HEK293 (cell line): ENCODE measurements at regions of chr22 and their contacts with region 1.

Region 1: DNA sequence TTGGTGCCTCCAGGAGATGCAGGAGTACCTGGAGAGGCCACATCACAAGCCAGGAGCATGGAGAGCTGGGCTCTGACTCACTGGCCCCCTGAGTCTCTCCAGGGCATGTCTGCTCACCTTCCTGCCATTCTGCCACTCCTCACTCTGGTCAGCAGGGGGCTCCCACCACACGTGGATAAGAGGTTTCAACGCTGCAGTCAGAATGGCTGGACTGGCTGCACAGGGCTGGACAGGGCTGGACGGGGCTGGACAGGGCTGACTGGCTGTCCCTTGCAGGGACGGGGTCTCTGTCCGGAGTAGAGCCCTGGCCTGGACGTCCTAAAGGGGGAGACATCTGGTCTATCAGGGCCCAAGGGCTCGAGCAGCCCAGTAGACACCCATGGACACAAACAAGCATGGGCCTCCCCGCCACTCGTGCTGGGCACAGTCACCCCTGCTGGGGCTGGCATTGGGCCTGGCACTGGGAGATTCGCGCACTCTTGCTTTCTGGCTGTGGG is 34.6 kb downstream of the CYTH4 start:
- H3K4me3 ChIP-seq: no peak overlapping the region
- H3K27ac ChIP-seq: no peak overlapping the region
- H3K4me1 ChIP-seq: no peaks in the 10 kb centered on the region
- CTCF ChIP-seq: peak; percentile 95

Region 2: DNA sequence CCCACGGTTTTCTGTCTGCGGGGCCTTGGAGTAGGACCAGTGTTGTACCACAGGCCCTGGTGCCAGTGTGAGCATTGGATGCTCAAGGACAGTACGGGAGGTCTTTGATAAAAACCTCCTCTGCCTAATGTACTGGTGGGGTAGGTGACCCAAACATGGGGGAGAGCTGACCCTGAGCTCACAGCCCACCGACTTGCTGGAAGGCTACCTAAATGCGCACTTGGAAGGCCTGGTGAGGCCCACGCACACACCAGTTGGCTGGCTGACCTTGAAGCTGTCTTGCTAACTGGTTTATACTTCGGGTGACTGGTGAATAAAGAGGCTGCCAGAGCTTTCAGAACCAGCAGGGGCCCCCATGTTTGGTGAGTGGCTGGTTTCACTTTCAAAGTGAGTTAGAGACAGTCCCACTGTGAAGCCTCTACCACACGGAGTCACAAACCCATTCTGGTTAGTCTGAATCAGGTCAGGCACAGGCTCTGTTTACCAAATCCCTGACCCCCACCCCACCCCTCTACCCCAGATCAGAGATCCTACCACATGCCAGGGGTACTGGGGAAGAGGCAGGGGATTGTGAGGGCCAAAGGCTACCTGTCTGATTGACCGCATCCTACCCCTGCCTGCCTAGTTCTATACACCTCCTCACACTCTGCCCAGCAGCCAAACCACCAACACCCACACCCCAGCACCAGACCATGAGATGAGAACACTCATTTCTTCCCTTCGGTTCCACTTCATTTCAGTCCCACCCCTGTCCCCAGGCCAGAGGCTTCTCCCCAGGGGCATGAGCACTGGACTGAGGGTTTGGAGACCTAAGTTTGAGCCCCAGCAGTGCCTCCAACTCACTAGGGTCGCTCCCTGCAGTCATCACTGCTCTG is 154.5 kb before region 1 on chr22:
- CTCF ChIA-PET with region 1: no interaction called
- POLR2A ChIA-PET with region 1: no interaction called
- H3K4me3 ChIP-seq: no peak overlapping the region
- H3K27ac ChIP-seq: no peak overlapping the region
- H3K4me1 ChIP-seq: no peaks in the 10 kb centered on the region
- CTCF ChIP-seq: no peak

Region 3: GRCh38 chr22:37267135-37267587 is 49.8 kb before region 1 on chr22:
- CTCF ChIA-PET with region 1: interaction called, 10 read pairs
- POLR2A ChIA-PET with region 1: no interaction called
- H3K4me3 ChIP-seq: peak overlapping the region; percentile 12; the same call in 1 of the 2 replicates
- H3K27ac ChIP-seq: no peak overlapping the region
- H3K4me1 ChIP-seq: no peaks in the 10 kb centered on the region
- CTCF ChIP-seq: no peak

Region 4: DNA sequence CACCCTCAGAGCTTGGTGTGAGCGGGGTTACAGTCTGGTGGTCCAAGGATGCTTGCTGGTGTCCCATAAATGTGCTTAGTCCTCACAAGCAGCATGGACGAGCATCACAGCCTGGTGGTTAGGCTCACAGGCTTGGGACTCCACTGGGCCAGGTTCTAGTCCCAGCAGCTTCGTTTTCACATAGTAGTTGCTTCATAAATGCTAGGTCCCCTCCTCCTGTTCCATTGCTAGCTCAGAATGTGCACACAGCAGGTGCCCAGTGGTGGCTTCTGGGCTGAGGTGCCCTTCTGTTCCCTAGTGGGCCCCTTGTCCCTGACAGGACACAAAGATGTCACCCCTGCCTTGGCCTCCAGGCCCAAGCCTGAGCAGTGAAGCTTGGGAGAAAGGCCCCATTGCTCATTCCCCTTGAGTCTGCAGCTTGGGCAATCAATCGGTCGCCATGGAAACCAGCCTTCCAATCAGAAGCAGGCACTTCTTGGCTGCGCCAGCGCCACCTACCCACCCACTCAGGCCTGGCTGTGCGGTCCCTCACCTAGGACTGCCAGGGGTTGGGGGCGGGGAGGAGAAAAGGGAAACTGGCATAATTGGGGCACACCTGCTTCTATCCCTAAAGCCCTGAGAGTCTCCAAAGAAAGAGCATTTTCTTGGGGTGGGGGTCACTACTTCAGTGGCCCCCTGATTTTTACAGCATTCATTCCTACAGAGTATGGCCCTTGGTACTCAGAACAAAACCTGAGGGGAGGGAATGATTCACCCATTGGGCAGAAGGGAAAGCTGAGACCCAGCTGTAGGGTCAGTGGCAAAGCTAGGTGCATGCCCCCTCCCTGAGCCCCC is 13.5 kb after region 1 on chr22:
- CTCF ChIA-PET with region 1: interaction called, 42 read pairs
- POLR2A ChIA-PET with region 1: no interaction called
- H3K4me3 ChIP-seq: no peak overlapping the region
- H3K27ac ChIP-seq: no peak overlapping the region
- H3K4me1 ChIP-seq: no peaks in the 10 kb centered on the region
- CTCF ChIP-seq: peak; percentile 37; the same call in 1 of the 2 replicates

Region 5: DNA sequence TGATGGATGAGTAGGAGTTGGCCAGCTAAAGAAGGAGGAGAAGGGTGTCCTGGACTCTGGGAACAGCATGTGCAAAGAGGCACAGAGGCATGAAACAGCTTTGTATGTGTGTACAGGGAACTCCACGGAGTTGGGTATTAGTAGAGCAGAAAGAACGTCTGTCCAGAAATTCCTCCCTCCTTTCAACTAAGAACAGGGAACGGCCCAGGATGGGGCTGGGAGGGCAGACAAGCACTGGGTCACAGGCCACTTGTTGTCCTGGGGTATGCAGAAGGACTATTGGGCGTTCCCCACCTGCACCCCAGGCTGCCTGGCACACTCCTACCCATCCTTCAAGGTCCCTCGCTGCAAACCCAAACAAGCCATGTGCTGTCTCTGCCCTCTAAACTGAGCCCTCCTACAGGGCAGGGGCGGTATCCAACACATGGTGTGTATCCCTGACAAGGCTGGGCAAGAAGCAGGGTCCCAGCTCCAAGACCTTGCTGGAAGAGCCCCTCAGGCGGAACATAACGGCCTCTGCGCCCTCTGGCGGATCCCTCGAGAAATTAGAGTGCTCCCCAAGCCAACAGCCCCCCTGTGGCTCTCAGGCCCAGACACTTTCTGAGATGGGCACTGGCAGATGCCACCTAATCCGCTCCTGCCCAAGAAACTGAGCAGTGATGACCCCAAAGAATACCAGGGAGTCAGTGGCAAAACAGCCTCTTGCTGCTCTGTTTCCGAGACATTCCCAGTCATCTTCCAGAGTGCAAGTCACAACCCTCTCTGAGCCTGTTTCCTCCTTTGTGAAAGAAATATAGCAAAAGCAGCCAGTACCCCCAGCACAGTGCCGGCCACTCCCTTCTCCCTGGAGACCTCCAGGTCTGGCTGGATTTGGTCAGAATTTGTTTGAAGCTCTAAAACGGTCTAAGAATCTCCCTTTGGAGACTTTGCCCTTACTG is 112.0 kb after region 1 on chr22:
- CTCF ChIA-PET with region 1: interaction called, 17 read pairs
- POLR2A ChIA-PET with region 1: no interaction called
- H3K4me3 ChIP-seq: no peak overlapping the region
- H3K27ac ChIP-seq: no peak overlapping the region
- H3K4me1 ChIP-seq: no peaks in the 10 kb centered on the region
- CTCF ChIP-seq: peak; percentile 63